ENCODE measurements at regions of chr19 and their contacts with region 1.

Region 1: GRCh38 chr19:35716801-35717666 is 769 bp upstream of the KMT2B start:
- DNase-seq: peak; percentile 97
- H3K4me3 Mint-ChIP-seq: peak overlapping the region; percentile 92
- H3K27ac Mint-ChIP-seq: peak overlapping the region; percentile 99
- H3K4me1 Mint-ChIP-seq: peaks cover 60% of the 10 kb centered on the region
- H3K27me3 Mint-ChIP-seq: no peaks in the 10 kb centered on the region

Region 2: DNA sequence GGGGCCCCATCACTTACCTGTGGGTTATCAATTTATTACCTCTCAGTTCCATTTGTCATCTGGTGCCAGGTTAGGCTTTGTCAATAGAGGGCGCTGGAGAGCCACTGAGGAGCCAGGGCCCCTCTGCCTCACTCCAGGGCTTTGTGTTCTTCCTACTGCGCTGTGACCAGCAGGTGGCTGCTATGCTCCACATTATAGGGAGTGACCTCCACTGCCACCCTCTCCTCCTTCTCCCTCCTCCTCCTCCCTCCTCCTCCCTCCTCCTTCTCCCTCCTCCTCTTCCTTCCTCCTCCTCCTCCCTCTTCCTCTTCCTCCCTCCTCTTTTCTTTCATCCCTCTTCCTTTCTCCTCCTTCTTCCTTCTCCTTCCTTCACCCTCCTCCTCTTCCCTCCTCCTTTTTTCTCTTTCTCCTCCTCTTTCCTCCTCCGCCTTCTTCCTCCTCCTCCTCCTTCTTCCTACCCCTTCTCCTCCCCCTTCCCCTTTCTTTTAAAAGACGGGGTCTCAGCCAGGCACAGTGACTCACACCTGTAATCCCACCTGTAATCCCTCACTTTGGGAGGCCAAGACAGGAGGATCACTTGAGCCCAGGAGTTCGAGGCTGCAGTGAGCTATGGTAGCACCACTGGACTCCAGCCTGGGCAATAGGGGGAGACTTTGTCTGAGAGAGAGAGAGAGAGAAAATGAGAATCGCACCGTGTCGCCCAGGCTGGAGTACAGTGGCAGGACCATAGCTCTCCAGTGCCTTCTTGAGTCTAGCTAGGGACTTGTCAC is 23.0 kb before region 1 on chr19:
- CTCF ChIA-PET with region 1: interaction called, 131 read pairs
- POLR2A ChIA-PET with region 1: interaction called, 141 read pairs
- DNase-seq: peak; percentile 93
- H3K4me3 Mint-ChIP-seq: no peak overlapping the region
- H3K27ac Mint-ChIP-seq: peak overlapping the region; percentile 52
- H3K4me1 Mint-ChIP-seq: peaks cover 19% of the 10 kb centered on the region
- H3K27me3 Mint-ChIP-seq: peaks cover 3% of the 10 kb centered on the region

Region 3: GRCh38 chr19:35702223-35703012 is 14.6 kb before region 1 on chr19:
- CTCF ChIA-PET with region 1: interaction called, 131 read pairs
- POLR2A ChIA-PET with region 1: interaction called, 160 read pairs
- DNase-seq: peak; percentile 97
- H3K4me3 Mint-ChIP-seq: peak overlapping the region; percentile 90
- H3K27ac Mint-ChIP-seq: peak overlapping the region; percentile 98
- H3K4me1 Mint-ChIP-seq: peaks cover 19% of the 10 kb centered on the region
- H3K27me3 Mint-ChIP-seq: no peaks in the 10 kb centered on the region

Region 4: GRCh38 chr19:35812220-35813042 is 95.4 kb after region 1 on chr19 and contains the start of gene PRODH2:
- CTCF ChIA-PET with region 1: no interaction called
- POLR2A ChIA-PET with region 1: no interaction called
- DNase-seq: no peak
- H3K4me3 Mint-ChIP-seq: no peak within 1 kb of the TSS
- H3K27ac Mint-ChIP-seq: no peak within 1 kb of the TSS
- H3K4me1 Mint-ChIP-seq: no peaks in the 10 kb centered on the region
- H3K27me3 Mint-ChIP-seq: peaks cover 7% of the 10 kb centered on the region
- total RNA-seq, gene PRODH2: not detected